WTC11 (cell line): ENCODE measurements at regions of chrX and their contacts with region 1.

Region 1: DNA sequence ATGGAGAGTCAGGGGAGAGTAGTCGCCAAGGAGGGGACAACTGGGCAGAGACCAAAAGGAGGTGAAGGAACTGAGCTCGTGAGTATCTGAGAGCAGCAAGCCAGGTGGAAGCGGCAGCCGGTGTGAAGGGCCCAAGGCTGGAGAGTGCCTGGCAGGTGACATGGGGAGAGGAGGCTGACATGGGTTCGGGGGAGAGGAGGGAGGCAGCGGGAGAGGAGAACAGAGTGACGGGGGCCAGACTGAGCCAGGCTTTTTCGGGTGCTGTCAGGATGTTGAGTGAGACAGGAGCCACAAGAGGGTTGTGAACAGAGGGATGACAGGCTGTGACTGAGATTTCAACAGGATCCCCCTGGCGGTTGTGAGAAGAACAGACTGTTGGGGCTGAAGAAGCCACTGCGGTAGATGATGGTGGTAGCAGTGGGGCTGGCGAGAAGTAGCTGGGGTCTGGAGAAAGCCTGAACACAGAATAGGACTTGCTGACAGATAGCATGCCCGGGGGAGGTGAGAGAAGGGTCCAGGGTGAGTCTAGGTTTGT is 5.7 kb downstream of the ELK1 start:
- DNase-seq: peak; percentile 25
- ATAC-seq: peak; percentile 93
- H3K4me3 Mint-ChIP-seq: no peak overlapping the region
- H3K27ac Mint-ChIP-seq: peak overlapping the region; percentile 91
- H3K4me1 Mint-ChIP-seq: peaks cover 15% of the 10 kb centered on the region
- H3K27me3 Mint-ChIP-seq: no peaks in the 10 kb centered on the region
- CTCF ChIP-seq: peak; percentile 38; the same call in 1 of the 2 replicates

Region 2: DNA sequence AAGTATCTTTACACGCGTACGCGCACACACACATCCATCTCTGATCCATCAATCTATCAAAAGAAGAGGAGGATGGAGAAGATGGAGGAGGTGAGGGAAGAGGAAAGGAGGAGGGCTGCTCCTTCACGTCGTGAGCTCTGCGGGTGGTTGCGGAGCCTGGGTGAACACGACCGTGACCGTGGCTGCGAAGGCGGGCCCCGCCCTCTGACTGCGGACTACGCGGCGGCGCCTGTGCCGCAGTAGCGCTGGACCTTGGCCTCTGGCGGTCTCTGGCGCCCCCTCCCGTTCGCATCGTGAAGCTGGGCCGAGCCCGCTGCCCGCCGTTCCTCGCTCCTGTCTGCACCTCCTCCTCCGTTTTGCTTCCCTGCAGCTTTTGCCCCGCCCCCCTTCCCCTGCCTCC is 121.3 kb before region 1 on chrX:
- CTCF ChIA-PET with region 1: interaction called, 14 read pairs
- POLR2A ChIA-PET with region 1: no interaction called
- DNase-seq: peak; percentile 83
- ATAC-seq: peak; percentile 98
- H3K4me3 Mint-ChIP-seq: peak overlapping the region; percentile 71
- H3K27ac Mint-ChIP-seq: no peak overlapping the region
- H3K4me1 Mint-ChIP-seq: 0 out of 2 replicates have a peak, but pooled peaks cover 3% of the 10 kb centered on the region
- H3K27me3 Mint-ChIP-seq: peaks cover 9% of the 10 kb centered on the region
- CTCF ChIP-seq: peak; percentile 69

Region 3: DNA sequence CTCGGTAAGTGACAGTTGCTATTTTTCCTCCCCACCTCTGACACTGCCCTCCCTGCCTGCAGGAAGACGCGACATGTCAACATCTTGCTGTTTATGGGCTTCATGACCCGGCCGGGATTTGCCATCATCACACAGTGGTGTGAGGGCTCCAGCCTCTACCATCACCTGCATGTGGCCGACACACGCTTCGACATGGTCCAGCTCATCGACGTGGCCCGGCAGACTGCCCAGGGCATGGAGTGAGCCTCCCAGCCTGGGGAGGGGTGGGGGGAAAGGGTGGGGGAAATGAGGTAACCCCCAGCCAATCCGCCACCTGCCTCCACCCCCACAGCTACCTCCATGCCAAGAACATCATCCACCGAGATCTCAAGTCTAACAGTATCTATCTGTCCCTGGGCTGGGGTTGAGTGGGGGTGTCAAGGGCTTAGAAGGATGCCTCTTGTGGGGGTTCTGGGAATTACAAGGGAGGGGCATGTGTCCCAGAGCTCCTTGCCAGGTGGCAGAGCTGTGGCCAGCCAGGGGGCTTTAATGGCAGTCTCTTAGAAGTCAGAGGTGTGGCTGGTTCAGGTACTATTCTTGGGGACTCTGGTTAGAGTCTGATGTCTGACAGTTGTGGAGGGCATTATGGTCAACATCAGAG is 75.8 kb before region 1 on chrX:
- CTCF ChIA-PET with region 1: interaction called, 12 read pairs
- POLR2A ChIA-PET with region 1: no interaction called
- DNase-seq: peak; percentile 39
- ATAC-seq: peak; percentile 43
- H3K4me3 Mint-ChIP-seq: no peak overlapping the region
- H3K27ac Mint-ChIP-seq: no peak overlapping the region
- H3K4me1 Mint-ChIP-seq: peaks cover 18% of the 10 kb centered on the region
- H3K27me3 Mint-ChIP-seq: no peaks in the 10 kb centered on the region
- CTCF ChIP-seq: peak; percentile 63

Region 4: DNA sequence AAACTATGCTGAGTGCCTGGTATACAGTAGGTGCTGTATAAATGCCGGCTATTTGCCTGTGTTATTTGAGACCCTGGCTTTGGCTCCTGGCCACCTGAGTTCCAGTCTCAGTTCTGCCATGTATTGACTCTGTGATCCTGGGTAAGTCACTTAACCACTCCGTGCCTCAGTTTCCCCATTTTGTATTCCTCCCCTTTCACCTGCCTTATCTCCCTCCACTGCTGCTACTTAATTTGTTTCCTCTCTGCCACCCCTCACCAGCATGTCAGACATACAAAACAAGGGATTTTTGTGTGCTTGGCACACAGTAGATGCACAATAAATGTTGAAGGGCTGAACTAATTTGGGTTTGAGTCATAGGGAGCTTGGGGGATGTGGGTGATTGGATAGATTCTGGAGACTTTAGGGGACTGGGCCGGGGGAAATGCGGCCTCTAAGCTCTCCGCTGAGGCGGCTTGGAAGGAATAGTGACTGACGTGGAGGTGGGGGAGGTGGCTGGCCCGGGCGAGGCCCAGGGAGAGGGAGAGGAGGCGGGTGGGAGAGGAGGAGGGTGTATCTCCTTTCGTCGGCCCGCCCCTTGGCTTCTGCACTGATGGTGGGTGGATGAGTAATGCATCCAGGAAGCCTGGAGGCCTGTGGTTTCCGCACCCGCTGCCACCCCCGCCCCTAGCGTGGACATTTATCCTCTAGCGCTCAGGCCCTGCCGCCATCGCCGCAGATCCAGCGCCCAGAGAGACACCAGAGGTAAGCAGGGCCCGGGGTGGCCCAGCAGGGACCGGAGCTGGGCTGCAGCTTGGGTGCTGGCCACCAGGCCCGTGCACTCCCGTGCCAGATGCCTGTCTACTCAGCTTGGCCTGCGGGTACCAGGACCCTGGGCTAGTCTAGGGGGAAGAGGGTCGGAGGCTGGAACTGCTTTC is 62.6 kb before region 1 on chrX and contains the start of gene TIMP1:
- CTCF ChIA-PET with region 1: interaction called, 12 read pairs
- POLR2A ChIA-PET with region 1: no interaction called
- DNase-seq: peak; percentile 75
- ATAC-seq: peak; percentile 90
- H3K4me3 Mint-ChIP-seq: peak within 1 kb of the TSS; percentile 59
- H3K27ac Mint-ChIP-seq: peak within 1 kb of the TSS; percentile 57
- H3K4me1 Mint-ChIP-seq: peaks cover 32% of the 10 kb centered on the region
- H3K27me3 Mint-ChIP-seq: no peaks in the 10 kb centered on the region; the same call in 1 of the 2 replicates
- CTCF ChIP-seq: no peak
- total RNA-seq, gene TIMP1: 35.4 to 50.8 TPM (median 50.1 TPM) in 3 replicates

Region 5: GRCh38 chrX:47623540-47624027 is 21.0 kb before region 1 on chrX:
- CTCF ChIA-PET with region 1: interaction called, 17 read pairs
- POLR2A ChIA-PET with region 1: interaction called, 4 read pairs
- DNase-seq: peak; percentile 81
- ATAC-seq: peak; percentile 94
- H3K4me3 Mint-ChIP-seq: peak overlapping the region; percentile 72
- H3K27ac Mint-ChIP-seq: peak overlapping the region; percentile 90
- H3K4me1 Mint-ChIP-seq: peaks cover 21% of the 10 kb centered on the region
- H3K27me3 Mint-ChIP-seq: peaks cover 27% of the 10 kb centered on the region
- CTCF ChIP-seq: no peak